Heart left ventricle (tissue), 16 donors: ENCODE measurements at regions of chr6 and their contacts with region 1.

Region 1: DNA sequence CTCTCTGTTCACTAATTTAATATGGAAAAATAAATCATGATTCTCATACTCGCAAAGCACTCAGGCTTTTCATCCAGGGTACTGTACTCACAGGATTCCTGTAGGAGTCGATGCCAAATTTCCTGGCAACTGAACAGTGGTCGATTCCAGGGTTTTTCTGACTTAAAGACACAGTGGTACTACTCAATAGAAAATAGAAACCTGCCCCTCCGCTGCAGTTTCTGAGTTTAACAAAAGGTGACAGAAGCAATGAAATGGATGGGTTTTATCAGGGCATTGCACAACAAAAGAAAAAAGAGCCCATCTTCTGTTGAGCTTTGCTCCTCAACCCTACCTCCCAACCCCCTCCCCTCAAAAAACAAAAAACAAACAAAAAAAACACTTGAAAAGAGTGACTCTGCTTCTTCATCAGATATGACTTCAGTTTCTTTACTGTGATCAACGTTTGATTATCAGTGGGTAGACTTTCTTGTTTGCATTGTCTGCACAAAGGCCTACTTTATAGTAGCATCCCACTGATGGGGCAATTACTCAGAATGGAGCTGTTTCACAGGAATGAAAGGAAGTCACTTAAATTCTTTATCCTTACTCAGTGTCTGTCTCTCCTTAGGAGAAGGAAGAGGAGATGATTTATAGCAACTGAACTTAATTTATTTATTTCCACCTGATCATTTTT is 96.2 kb upstream of the FOXO3 start:
- DNase-seq: no peak
- ATAC-seq: no peak
- H3K4me3 ChIP-seq: no peak overlapping the region
- H3K27ac ChIP-seq: peak overlapping the region in 7 of 12 donors; percentile 11 to 48 (median 39)
- H3K4me1 ChIP-seq: peaks cover 0 to 39% (median 26%) of the 10 kb centered on the region in 12 donors
- H3K27me3 ChIP-seq: no peaks in the 10 kb centered on the region
- CTCF ChIP-seq: no peak
- POLR2A ChIP-seq: no peak

Region 2: DNA sequence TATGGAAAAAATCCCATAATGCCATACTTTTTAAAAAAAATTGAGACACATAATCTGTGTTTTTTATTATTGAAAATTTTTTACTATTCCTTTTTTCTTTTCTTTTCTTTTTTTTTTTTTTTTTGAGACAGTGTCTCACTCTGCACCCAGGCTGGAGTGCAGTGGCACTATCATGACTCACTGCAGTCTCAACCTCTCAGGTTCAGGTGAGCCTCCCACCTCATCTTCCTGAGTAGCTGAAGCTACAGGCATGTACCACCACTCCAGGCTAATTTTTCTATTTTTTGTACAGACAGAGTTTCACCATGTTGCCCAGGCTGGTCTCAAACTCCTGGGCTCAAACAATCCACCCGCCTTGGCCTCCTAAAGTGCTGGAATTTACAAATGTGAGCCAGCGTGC is 69.3 kb before region 1 on chr6:
- intact Hi-C with region 1: loop called in 1 of 10 experiments (anchors 10 kb)
- DNase-seq: no peak
- ATAC-seq: no peak
- H3K4me3 ChIP-seq: no peak overlapping the region
- H3K27ac ChIP-seq: no peak overlapping the region
- H3K4me1 ChIP-seq: no peaks in the 10 kb centered on the region
- H3K27me3 ChIP-seq: no peaks in the 10 kb centered on the region
- CTCF ChIP-seq: no peak
- POLR2A ChIP-seq: no peak

Region 3: GRCh38 chr6:108531336-108531735 is 66.8 kb after region 1 on chr6:
- intact Hi-C with region 1: no loop called
- DNase-seq: no peak
- ATAC-seq: no peak
- H3K4me3 ChIP-seq: no peak overlapping the region
- H3K27ac ChIP-seq: no peak overlapping the region
- H3K4me1 ChIP-seq: peaks cover 0 to 4% (median 0%) of the 10 kb centered on the region in 12 donors
- H3K27me3 ChIP-seq: no peaks in the 10 kb centered on the region
- CTCF ChIP-seq: no peak
- POLR2A ChIP-seq: no peak